B cell (primary cell): ENCODE measurements at regions of chr3 and their contacts with region 1.

Region 1: DNA sequence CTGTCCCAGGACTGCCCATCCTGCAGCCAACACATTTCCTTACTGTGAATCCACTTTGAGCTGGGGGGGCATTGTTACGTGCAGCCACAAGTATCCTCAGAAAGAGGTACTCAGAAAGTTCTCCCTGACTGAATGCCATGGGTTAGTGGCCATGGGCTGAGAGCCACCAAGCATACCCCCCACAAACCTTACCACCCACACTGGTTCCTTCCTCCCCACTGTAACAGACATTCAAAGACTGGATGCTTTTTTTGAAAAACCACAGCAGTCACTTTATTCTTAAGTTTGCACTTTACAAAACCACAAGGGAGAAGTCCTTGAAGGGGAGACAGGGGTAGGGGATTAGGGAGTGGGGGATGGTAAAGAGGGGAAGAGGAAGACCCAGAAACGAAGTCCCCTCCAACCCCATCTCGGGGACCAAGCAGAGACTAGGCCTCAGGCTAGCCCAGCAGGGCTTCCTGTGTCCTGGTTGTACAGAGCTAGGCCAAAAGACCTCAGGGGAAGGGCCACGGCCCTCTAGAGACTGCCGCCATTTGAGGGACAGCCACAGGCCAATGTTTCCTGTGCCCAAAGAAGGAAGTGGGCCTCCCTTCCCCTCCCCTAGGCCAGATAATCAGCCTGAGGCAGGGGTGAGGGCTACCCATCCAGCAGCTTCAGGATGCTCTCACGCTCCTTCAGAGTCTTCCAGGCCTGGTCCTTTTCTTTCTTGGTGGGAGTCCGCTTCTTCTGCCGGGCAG is 10.1 kb upstream of the CAMK1 start:
- DNase-seq: peak; percentile 73
- ATAC-seq: peak; percentile 74
- H3K4me3 ChIP-seq: peak overlapping the region in 3 of 5 experiments; percentile 1 to 18 (median 3)
- H3K4me3 Mint-ChIP-seq: peak overlapping the region; percentile 40
- H3K27ac ChIP-seq: peak overlapping the region; percentile 56 to 82
- H3K27ac Mint-ChIP-seq: peak overlapping the region; percentile 78
- H3K4me1 ChIP-seq: peaks cover 51 to 59% of the 10 kb centered on the region in 2 donors
- H3K4me1 Mint-ChIP-seq: peaks cover 59% of the 10 kb centered on the region
- H3K27me3 ChIP-seq: no peaks in the 10 kb centered on the region
- H3K27me3 Mint-ChIP-seq: no peaks in the 10 kb centered on the region
- CTCF ChIP-seq: no peak

Region 2: GRCh38 chr3:9843715-9844438 is 64.0 kb after region 1 on chr3 and contains the start of gene RPUSD3:
- CTCF ChIA-PET with region 1: interaction called, 7 read pairs
- POLR2A ChIA-PET with region 1: interaction called, 4 read pairs
- intact Hi-C with region 1: loop called (anchors 1 kb)
- DNase-seq: peak; percentile 97
- ATAC-seq: peak; percentile 100
- H3K4me3 ChIP-seq: peak within 1 kb of the TSS; percentile 60 to 96 (median 73)
- H3K4me3 Mint-ChIP-seq: peak within 1 kb of the TSS; percentile 98
- H3K27ac ChIP-seq: peak within 1 kb of the TSS; percentile 17 to 75
- H3K27ac Mint-ChIP-seq: peak within 1 kb of the TSS; percentile 92
- H3K4me1 ChIP-seq: peaks cover 8 to 17% of the 10 kb centered on the region in 2 donors
- H3K4me1 Mint-ChIP-seq: peaks cover 20% of the 10 kb centered on the region
- H3K27me3 ChIP-seq: no peaks in the 10 kb centered on the region
- H3K27me3 Mint-ChIP-seq: no peaks in the 10 kb centered on the region
- CTCF ChIP-seq: no peak
- total RNA-seq, gene RPUSD3: 60.7 and 62.1 TPM in 2 replicates

Region 3: DNA sequence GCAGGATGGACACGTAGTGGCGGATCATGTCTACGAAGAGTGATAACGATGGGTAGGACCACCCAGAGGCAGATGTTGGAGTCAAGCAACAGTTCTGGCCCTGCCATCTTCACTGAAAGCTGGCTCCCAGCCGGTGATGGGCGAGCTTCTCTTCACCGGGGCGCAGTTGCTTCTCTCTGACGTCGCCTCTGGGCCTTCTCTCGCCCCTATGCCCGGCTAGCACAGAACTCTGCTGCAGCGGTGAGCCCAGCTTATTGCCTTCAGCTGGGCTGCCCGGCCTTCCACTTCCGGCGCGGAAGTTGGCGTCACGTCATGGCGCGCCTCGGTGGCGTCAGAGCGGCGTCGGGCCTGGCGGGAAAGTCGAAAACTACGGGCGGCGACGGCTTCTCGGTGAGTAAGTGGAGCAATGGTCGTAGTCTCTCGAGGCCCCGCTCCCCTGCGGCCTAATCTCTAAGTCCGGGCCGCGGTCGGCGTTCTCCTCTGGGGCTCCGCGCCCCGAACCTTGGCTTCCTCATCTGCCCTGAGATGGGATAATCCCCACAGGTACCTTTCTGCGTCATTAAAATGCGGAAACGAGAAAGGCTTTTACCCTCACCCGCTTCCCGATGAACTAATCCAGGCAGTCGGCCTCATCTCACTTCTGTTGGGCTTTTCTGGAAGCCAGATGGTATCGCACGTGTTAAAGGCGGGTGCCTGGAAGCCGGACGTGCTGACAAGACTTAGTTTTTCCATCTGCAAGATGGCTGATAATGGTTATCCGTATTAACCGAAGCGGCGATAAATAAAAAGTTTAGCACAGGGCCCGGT is 246.4 kb after region 1 on chr3 and contains the start of gene FANCD2:
- CTCF ChIA-PET with region 1: no interaction called
- POLR2A ChIA-PET with region 1: no interaction called
- intact Hi-C with region 1: loop called (anchors 5 kb)
- DNase-seq: peak; percentile 96
- ATAC-seq: peak; percentile 83
- H3K4me3 ChIP-seq: peak within 1 kb of the TSS; percentile 83 to 94 (median 91)
- H3K4me3 Mint-ChIP-seq: peak within 1 kb of the TSS; percentile 99
- H3K27ac ChIP-seq: peak within 1 kb of the TSS; percentile 94 to 96
- H3K27ac Mint-ChIP-seq: peak within 1 kb of the TSS; percentile 96
- H3K4me1 ChIP-seq: peaks cover 18 to 23% of the 10 kb centered on the region in 2 donors
- H3K4me1 Mint-ChIP-seq: peaks cover 34% of the 10 kb centered on the region
- H3K27me3 ChIP-seq: no peaks in the 10 kb centered on the region
- H3K27me3 Mint-ChIP-seq: no peaks in the 10 kb centered on the region
- CTCF ChIP-seq: no peak
- total RNA-seq, gene FANCD2: 31.7 and 35.5 TPM in 2 replicates